ENCODE measurements at regions of chr15 and their contacts with region 1.

Region 1: DNA sequence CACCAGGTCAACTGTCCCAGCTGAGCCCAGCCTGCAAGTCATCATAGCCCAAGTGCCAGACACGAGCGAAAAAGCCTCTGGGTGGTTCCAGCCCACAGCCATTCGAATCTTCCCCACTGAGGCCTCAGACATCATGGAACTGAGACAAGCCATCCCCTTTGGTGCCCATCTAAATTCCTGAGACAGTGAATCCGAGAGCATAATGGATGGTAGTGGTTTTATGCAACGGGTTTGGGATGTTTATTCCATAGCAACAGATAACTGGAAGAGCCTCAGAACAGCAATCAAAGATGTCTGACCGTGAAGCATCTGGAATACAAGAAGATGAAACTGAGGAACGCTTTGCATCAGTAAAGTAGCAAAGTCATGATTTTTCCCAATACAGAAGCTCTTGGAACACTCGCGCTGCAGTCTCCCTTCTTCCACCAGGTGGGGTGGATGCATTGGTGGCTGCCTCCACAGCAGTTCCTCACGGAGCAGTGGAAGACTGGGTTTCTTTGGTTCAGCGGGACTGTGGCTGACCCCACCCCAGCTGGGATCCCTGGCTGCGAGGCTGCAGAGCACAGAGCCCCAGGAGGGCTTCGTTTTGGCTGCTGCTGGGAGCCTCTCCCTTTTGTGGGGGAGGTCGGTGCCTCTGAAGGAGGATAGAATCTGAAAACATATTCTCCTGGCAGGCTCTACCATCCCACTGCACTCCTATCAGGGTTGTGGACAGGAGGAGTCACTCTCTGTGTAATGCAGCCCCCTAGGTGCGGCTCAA is 26.4 kb upstream of the PDE8A start:
- DNase-seq: peak; percentile 77 to 89
- H3K4me3 ChIP-seq: peak overlapping the region; percentile 24 to 35 (median 28)
- H3K27ac ChIP-seq: no peak overlapping the region
- H3K4me1 ChIP-seq: peaks cover 0 to 12% (median 8%) of the 10 kb centered on the region in 4 donors
- H3K27me3 ChIP-seq: no peaks in the 10 kb centered on the region
- CTCF ChIP-seq: peak in 5 of 7 experiments; percentile 72 to 90 (median 83)
- EP300 ChIP-seq: no peak
- POLR2A ChIP-seq: no peak

Region 2: DNA sequence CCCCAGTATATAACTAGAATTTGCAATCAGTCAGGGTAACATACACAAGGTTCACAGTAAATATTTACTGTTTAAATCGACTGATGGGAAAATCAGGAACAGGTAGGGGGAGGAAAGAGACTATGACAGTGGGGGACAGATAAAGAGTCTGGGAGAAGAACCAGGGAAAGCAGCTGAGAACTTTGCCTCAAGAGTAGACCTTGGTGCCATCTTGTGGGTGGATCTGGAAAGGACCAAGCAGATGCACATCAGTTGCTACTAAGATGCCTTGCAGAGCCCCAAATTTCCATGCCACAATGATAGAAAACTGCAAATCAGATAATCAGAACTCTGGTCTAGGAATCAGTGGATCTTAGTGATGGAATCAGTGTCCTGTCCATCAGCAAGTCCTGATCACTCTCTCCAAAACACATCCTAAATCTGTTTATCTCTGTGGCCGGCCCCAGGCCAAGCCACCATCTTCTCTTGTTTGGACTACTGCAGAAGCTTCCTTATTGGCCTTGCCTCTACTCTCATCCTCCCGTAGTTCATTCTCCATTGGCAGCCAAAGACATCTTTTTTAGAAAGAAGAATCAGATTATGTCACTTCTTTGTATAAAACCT is 89.1 kb after region 1 on chr15:
- intact Hi-C with region 1: loop called (anchors 5 kb)
- DNase-seq: peak; percentile 61 to 84
- H3K4me3 ChIP-seq: no peak overlapping the region
- H3K27ac ChIP-seq: peak overlapping the region in 1 of 5 donors; percentile 54
- H3K4me1 ChIP-seq: peaks cover 0 to 54% (median 33%) of the 10 kb centered on the region in 4 donors
- H3K27me3 ChIP-seq: no peaks in the 10 kb centered on the region
- CTCF ChIP-seq: peak in 5 of 7 experiments; percentile 15 to 71 (median 62)
- EP300 ChIP-seq: no peak
- POLR2A ChIP-seq: no peak

Region 3: GRCh38 chr15:85073556-85074194 is 118.4 kb after region 1 on chr15:
- intact Hi-C with region 1: no loop called
- DNase-seq: no peak
- H3K4me3 ChIP-seq: no peak overlapping the region
- H3K27ac ChIP-seq: no peak overlapping the region
- H3K4me1 ChIP-seq: peaks cover 0 to 5% (median 0%) of the 10 kb centered on the region in 4 donors
- H3K27me3 ChIP-seq: no peaks in the 10 kb centered on the region
- CTCF ChIP-seq: no peak
- EP300 ChIP-seq: no peak
- POLR2A ChIP-seq: no peak